Activated T-helper 1 cell treated with anti-CD3 and anti-CD28 coated beads, Interleukin-12 subunit alpha, Interleukin-12 subunit beta, Interleukin-2, Interleukin-4 antibody, amounts not matched to agents 30 ng/mL and 10 ng/mL and 1 ng/mL, durations not matched to agents 14 hours and 24 hours and 36 hours (primary cell): ENCODE measurements at regions of chr10 and their contacts with region 1.

Region 1: GRCh38 chr10:73017955-73018480 is 63.4 kb upstream of the PLA2G12B start:
- DNase-seq: no peak
- H3K4me3 Mint-ChIP-seq: no peak overlapping the region
- H3K27ac Mint-ChIP-seq: no peak overlapping the region
- H3K4me1 Mint-ChIP-seq: peaks cover 31% of the 10 kb centered on the region
- H3K27me3 Mint-ChIP-seq: no peaks in the 10 kb centered on the region

Region 2: DNA sequence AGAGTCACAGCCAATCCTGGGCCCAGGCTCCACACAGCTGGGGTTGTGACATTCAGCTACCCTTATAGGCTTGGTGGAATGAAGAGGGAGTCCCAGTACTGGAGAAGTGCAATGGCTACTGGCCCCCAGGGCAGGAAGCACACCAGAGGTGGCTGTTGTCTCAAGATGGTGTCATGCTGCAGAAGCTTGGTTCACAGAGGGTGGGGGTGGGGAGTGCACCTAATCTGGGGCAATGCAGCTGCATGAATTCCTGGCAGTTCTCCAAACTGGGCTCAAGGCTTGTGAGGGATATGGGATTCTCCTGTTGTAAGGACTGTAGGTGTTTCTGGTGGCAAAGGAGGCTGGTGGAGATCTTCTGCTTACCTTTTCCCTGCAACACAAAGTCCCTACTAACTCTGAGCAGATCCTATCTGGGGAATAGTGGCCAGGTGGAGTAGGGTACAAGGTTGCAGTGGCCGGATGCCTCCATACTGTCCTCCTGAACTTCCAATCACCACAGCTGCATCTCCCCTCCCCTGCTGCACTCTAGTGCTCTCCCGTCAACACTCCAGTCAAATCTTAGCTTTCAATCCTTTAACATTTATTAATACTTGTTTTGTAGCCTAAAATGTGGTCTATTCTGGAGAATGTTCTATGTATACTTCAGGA is 36.0 kb before region 1 on chr10:
- intact Hi-C with region 1: no loop called
- DNase-seq: no peak
- H3K4me3 Mint-ChIP-seq: no peak overlapping the region
- H3K27ac Mint-ChIP-seq: no peak overlapping the region
- H3K4me1 Mint-ChIP-seq: no peaks in the 10 kb centered on the region
- H3K27me3 Mint-ChIP-seq: peaks cover 2% of the 10 kb centered on the region

Region 3: DNA sequence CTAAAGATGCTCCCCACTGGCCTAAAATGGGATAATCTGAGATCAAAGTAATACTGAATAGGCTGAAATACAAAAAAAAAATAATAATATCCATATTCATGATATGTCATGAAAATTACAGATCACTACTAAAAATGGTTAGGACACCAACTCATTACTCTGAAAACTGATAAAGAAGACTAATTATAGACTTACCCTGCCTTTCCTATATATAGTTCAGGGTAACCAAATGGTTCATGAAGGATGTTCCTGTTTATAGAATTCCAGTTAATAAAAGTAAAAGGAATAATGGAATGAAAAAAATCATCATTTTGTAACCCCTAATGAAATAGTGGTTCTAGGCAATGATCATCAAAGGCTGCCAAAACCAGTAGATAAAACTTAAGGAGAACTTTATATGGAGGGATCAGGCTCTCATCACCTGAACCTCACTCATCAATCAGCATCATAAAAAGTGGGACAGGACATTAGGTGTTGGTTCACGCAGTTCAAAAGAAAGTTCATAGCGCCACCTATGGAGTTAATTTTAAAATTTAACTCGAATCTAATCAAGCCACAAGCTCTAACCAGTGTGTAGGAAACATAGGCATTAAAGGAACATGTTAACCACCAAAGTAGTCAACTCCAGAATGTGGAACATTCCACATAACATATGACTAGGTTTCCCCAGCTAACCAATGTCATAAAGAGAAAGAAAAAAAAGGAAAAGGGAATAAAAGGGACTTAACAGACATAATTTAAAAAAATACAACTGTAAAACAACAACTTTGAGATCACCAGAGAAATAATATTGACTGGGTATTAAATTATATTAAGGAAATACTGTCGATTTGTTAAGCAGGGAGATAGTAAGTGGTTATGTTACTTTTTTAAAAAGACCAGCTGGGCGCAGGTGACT is 43.0 kb after region 1 on chr10:
- intact Hi-C with region 1: loop called (anchors 1 kb)
- DNase-seq: no peak
- H3K4me3 Mint-ChIP-seq: no peak overlapping the region
- H3K27ac Mint-ChIP-seq: peak overlapping the region; percentile 18
- H3K4me1 Mint-ChIP-seq: peaks cover 19% of the 10 kb centered on the region
- H3K27me3 Mint-ChIP-seq: no peaks in the 10 kb centered on the region